ENCODE measurements at regions of chr18 and their contacts with region 1.

Region 1: GRCh38 chr18:45890606-45891005 is 65.1 kb downstream of the SIGLEC15 start:
- DNase-seq: peak in 2 of 3 donors; percentile 39 to 54
- ATAC-seq: peak in 1 of 2 donors; percentile 26
- H3K4me3 ChIP-seq: no peak overlapping the region
- H3K27ac ChIP-seq: no peak overlapping the region
- H3K4me1 ChIP-seq: no peaks in the 10 kb centered on the region
- H3K27me3 ChIP-seq: no peaks in the 10 kb centered on the region

Region 2: GRCh38 chr18:45951016-45951714 is 60.6 kb after region 1 on chr18:
- intact Hi-C with region 1: loop called in 1 of 4 experiments (anchors 10 kb)
- DNase-seq: peak in 1 of 3 donors; percentile 25
- ATAC-seq: no peak
- H3K4me3 ChIP-seq: no peak overlapping the region
- H3K27ac ChIP-seq: no peak overlapping the region
- H3K4me1 ChIP-seq: no peaks in the 10 kb centered on the region
- H3K27me3 ChIP-seq: no peaks in the 10 kb centered on the region

Region 3: GRCh38 chr18:45980229-45980628 is 89.6 kb after region 1 on chr18:
- intact Hi-C with region 1: no loop called
- DNase-seq: no peak
- ATAC-seq: no peak
- H3K4me3 ChIP-seq: no peak overlapping the region
- H3K27ac ChIP-seq: no peak overlapping the region
- H3K4me1 ChIP-seq: no peaks in the 10 kb centered on the region
- H3K27me3 ChIP-seq: no peaks in the 10 kb centered on the region

Region 4: GRCh38 chr18:46097801-46098615 is 207.4 kb after region 1 on chr18 and contains the start of gene ATP5F1A:
- intact Hi-C with region 1: no loop called
- DNase-seq: peak; percentile 87 to 95 (median 94)
- ATAC-seq: peak; percentile 92
- H3K4me3 ChIP-seq: peak within 1 kb of the TSS; percentile 73
- H3K27ac ChIP-seq: peak within 1 kb of the TSS; percentile 94
- H3K4me1 ChIP-seq: no peaks in the 10 kb centered on the region
- H3K27me3 ChIP-seq: no peaks in the 10 kb centered on the region
- total RNA-seq, gene ATP5F1A: 1,050 to 1,210 (median 1,148) TPM